ENCODE measurements at regions of chr3 and their contacts with region 1.

Region 1: DNA sequence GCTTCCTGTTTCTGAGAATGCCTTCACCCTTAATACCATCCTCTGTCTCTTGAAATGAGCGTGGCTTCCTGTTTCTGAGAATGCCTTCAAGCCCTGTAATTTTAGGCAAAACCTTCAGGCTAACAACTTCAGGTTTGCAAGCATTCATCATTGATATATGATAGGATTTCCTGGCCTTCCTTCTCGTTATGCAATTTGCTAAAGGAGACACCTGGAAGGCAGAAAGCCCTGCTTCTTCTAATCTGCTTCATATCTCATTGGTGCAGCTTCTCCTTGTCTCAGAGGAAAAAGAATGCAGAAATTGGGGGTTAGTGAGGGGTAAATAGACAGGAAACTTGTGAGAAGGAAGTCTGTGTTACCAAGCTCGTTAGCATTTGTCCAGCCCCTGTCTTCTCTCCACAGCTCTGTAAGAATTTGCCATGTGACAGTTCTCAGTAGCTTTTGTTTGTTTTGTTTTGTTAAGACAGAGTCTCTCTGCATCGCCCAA is 7.3 kb downstream of the ARL6IP5 start:
- H3K4me3 Mint-ChIP-seq: peak overlapping the region; percentile 79
- H3K27ac Mint-ChIP-seq: peak overlapping the region; percentile 94
- H3K4me1 Mint-ChIP-seq: peaks cover 71% of the 10 kb centered on the region
- H3K27me3 Mint-ChIP-seq: no peaks in the 10 kb centered on the region

Region 2: DNA sequence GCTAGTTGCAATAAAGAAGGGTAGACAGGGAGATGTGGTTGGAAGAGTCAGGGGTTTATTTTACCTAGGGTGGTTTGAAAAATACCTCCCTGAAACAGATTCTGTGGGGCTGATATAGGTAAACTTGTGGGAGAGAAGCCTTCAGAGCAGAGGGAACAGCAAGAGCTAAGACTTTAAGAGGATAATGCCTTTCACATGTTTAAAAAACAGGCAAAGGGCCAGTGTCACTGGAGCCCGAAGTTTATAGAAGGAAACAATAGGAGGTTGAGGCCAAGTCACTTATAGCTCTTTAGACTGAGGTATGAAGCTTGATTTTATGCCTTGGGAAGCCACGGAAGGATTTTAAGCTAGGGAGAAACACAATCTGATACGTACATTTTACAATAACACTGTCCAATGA is 608.5 kb before region 1 on chr3:
- intact Hi-C with region 1: no loop called
- H3K4me3 Mint-ChIP-seq: no peak overlapping the region
- H3K27ac Mint-ChIP-seq: no peak overlapping the region
- H3K4me1 Mint-ChIP-seq: no peaks in the 10 kb centered on the region
- H3K27me3 Mint-ChIP-seq: no peaks in the 10 kb centered on the region

Region 3: GRCh38 chr3:68893600-68894239 is 198.4 kb before region 1 on chr3:
- intact Hi-C with region 1: no loop called
- H3K4me3 Mint-ChIP-seq: no peak overlapping the region
- H3K27ac Mint-ChIP-seq: no peak overlapping the region
- H3K4me1 Mint-ChIP-seq: no peaks in the 10 kb centered on the region
- H3K27me3 Mint-ChIP-seq: peaks cover 8% of the 10 kb centered on the region

Region 4: DNA sequence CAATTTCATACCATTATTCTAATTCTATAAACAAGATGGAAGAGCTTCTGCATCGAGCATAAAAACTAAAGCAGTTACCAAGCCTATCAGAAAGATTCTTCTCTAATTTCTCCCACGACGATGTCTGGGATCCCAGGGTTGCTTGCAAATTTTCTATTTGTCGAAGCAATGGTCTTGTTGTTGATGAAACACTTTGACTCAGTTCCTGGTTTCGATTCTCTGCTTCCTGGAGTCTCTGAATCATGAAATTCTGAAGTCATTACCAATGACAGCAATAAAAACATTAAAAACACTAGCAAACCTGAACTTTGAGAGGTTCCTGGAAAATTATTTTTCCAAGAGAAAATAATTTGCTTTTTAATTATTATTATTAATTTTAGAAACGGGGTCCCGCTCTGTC is 58.6 kb before region 1 on chr3:
- intact Hi-C with region 1: no loop called
- H3K4me3 Mint-ChIP-seq: no peak overlapping the region
- H3K27ac Mint-ChIP-seq: peak overlapping the region; percentile 62
- H3K4me1 Mint-ChIP-seq: peaks cover 6% of the 10 kb centered on the region
- H3K27me3 Mint-ChIP-seq: no peaks in the 10 kb centered on the region

Region 5: GRCh38 chr3:69079269-69080159 is 12.6 kb before region 1 on chr3:
- intact Hi-C with region 1: loop called (anchors 1 kb)
- H3K4me3 Mint-ChIP-seq: peak overlapping the region; percentile 76
- H3K27ac Mint-ChIP-seq: peak overlapping the region; percentile 81
- H3K4me1 Mint-ChIP-seq: peaks cover 42% of the 10 kb centered on the region
- H3K27me3 Mint-ChIP-seq: no peaks in the 10 kb centered on the region

Region 6: DNA sequence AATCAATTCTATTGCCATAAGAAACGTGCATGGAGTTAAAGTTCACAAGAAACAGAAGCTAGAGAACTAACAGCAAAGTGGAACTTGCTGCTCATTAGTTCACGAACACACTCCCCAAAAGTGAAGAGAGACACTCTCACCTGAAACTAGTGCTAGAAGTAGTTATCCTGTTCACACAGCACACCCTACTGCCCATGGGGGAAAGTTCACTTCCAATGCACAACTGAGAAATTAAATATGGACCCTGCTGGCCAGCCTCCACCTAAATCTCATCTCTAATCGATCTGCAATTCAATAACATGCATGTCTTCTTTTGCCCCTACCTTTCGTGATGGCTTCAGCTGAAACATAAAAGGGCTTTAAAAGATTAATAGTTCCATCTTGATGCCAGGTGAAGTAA is 333.2 kb after region 1 on chr3:
- intact Hi-C with region 1: no loop called
- H3K4me3 Mint-ChIP-seq: no peak overlapping the region
- H3K27ac Mint-ChIP-seq: no peak overlapping the region
- H3K4me1 Mint-ChIP-seq: peaks cover 16% of the 10 kb centered on the region
- H3K27me3 Mint-ChIP-seq: no peaks in the 10 kb centered on the region